ENCODE measurements at regions of chr19 and their contacts with region 1.

Region 1: GRCh38 chr19:734716-735115 is 16.2 kb upstream of the MISP start:
- DNase-seq: no peak
- ATAC-seq: no peak

Region 2: DNA sequence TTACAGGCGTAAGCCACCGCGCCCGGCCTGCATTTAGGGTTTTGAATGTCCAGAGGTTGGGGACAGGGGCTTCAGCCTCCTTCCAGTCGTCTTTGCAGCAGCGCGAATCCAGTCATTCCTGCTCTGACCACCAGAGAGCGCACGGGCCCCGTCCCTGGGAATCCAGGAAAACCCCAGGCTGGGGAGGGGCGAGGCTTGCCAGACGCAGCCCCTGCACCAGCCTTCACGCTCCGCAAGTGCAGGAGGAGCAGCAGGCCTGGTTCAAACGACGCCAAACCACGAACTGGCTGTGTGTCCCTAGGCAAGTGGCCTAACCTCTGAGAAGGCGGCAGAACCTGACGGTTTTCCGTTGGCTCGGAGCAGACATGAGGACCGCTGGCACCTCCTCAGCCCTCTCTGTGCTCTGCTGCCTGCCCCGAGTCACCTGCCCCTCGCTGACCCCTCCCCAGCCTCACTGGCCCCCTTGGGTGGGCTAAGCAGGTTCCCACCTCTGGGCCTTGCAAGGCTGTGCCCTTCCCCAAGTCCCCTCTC is 69.7 kb before region 1 on chr19:
- intact Hi-C with region 1: loop called (anchors 2 kb)
- DNase-seq: peak; percentile 91
- ATAC-seq: peak; percentile 65